ENCODE measurements at regions of chr1 and their contacts with region 1.

Region 1: DNA sequence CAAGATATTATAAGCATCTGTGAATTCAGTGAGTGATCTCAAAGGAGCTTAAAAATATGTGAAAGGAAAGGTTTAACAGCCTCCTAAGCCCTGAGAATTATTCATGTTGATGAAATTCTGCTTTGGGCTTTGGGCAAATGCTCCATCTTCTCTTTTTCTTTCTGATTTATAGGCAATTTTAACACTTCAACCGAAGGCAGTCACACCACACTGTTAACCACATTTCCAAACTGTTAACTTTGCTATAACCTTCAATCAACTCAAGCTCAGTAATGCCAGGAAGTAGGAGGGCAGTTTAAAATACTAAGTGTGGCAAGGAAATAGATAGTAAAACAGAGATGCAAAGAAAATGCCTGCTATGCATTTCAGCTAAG is 54.4 kb upstream of the NEK7 start:
- DNase-seq: peak; percentile 14
- ATAC-seq: peak; percentile 75
- H3K4me3 Mint-ChIP-seq: peak overlapping the region; percentile 24
- H3K27ac Mint-ChIP-seq: peak overlapping the region; percentile 79
- H3K4me1 Mint-ChIP-seq: peaks cover 24% of the 10 kb centered on the region
- H3K27me3 Mint-ChIP-seq: no peaks in the 10 kb centered on the region
- CTCF ChIP-seq: no peak

Region 2: DNA sequence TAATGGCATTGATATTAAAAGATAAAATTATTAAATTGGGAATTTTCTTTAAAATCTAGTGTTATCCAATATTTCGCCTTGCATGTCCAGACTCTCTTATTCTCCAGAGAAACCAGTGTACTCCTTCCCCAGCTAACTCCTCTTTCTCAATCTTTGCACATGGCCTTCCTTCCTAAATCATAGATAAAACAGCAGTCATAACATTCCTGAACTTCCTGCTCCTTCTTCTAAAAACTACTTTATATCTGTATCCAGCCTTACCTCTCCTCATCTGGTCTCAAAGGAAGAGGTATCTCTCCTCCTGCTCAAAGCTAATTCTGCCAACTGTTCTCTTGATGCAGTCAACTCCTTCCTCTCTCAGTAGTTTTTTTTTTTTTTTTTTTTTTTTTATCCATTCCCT is 14.8 kb after region 1 on chr1:
- CTCF ChIA-PET with region 1: interaction called, 10 read pairs
- POLR2A ChIA-PET with region 1: interaction called, 3 read pairs
- intact Hi-C with region 1: no loop called
- DNase-seq: no peak
- ATAC-seq: no peak
- H3K4me3 Mint-ChIP-seq: no peak overlapping the region
- H3K27ac Mint-ChIP-seq: no peak overlapping the region
- H3K4me1 Mint-ChIP-seq: no peaks in the 10 kb centered on the region
- H3K27me3 Mint-ChIP-seq: peaks cover 2% of the 10 kb centered on the region
- CTCF ChIP-seq: no peak